AG04449 (cell line): ENCODE measurements at regions of chr9 and their contacts with region 1.

Region 1: DNA sequence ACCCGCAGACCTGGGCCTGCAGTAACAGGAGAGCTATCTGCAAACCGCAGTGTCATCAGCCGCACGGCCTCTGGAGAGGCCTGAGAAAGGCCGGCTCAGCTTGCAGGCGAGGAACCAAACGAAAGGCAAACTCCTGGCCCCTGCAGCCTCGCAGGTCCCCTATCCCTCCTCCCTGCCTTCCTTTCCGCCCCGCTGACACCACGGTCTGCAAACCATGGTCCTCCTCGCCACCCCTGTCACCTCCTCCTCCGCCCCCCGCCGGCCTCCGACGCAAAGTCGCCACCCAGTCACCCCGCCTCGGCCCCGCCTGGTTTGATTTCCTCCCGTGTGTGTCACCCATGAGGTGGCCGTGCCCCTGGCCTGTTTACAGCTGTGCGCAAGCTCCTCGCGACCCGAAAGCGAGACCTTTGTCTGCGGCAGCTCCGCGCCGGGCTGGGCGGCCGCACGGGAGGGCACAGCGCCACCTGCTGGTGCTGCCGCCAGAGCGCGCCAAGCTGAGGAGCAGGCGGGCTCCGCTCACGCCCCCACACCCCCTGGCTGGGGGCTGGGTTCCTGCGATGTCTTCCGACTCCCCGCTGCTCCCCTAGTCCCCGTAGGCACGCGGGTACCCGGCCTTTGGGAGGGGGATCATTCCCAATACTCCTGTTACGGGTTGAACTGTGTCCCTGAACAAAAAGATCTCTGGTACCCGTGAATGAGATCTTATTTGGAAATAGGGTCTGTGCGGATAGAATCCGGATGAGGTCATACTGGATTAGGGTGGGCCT is 19.4 kb downstream of the GBGT1 start:
- DNase-seq: no peak
- H3K4me3 ChIP-seq: peak overlapping the region; percentile 49
- CTCF ChIP-seq: peak; percentile 93

Region 2: GRCh38 chr9:133023117-133023890 is 121.0 kb before region 1 on chr9:
- CTCF ChIA-PET with region 1: interaction called, 85 read pairs
- POLR2A ChIA-PET with region 1: no interaction called
- DNase-seq: no peak
- H3K4me3 ChIP-seq: no peak overlapping the region
- CTCF ChIP-seq: no peak

Region 3: DNA sequence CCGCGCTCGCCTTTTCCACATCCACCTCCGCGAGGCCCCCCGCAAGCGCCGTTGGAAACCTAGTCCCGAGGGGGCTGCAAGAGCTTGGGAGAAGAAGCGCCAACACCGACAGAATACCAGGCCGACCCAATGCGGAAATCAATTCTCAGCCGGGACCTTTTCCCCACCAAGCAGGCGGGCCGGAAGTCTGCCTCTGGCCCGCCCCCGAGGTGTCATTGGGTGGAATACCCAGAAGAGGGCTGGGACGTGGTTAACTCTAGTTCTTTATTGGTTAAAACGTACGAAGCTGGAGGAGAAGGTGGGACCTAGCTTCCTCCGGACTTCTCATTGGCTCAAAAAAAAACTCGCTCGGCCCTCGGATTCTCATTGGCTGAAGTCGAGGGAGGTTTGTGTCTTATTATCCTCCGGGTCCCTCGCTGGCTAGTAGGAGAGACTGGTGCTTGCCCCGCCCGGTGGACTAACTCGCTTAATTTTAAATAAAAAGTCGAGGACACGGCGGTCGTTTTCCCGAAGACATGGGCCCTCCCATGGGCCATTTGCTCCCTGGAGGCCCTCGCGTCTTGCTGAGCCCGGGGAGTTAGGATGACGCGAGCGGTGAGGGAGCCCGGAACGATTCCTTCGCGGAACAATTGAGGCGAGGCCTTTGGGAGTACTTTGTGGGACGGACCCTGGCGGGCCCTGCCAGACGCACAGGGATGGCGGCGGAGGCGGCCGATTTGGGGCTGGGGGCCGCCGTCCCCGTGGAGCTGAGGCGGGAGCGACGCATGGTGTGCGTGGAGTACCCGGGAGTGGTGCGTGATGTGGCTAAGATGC is 113.8 kb before region 1 on chr9 and contains the start of gene GTF3C5:
- CTCF ChIA-PET with region 1: interaction called, 462 read pairs
- POLR2A ChIA-PET with region 1: no interaction called
- DNase-seq: peak; percentile 96
- H3K4me3 ChIP-seq: peak within 1 kb of the TSS; percentile 92
- CTCF ChIP-seq: no peak

Region 4: GRCh38 chr9:133075925-133076630 is 68.2 kb before region 1 on chr9:
- CTCF ChIA-PET with region 1: interaction called, 68 read pairs
- POLR2A ChIA-PET with region 1: no interaction called
- DNase-seq: peak; percentile 80
- H3K4me3 ChIP-seq: no peak overlapping the region; the same call in 1 of the 2 replicates
- CTCF ChIP-seq: no peak

Region 5: GRCh38 chr9:133089271-133089671 is 55.0 kb before region 1 on chr9:
- CTCF ChIA-PET with region 1: interaction called, 739 read pairs
- POLR2A ChIA-PET with region 1: no interaction called
- DNase-seq: no peak
- H3K4me3 ChIP-seq: no peak overlapping the region
- CTCF ChIP-seq: no peak

Region 6: GRCh38 chr9:133440874-133441273 is 296.6 kb after region 1 on chr9:
- CTCF ChIA-PET with region 1: no interaction called
- POLR2A ChIA-PET with region 1: no interaction called
- DNase-seq: no peak
- H3K4me3 ChIP-seq: no peak overlapping the region
- CTCF ChIP-seq: no peak